CD4-positive, alpha-beta T cell (primary cell): ENCODE measurements at regions of chr12 and their contacts with region 1.

Region 1: DNA sequence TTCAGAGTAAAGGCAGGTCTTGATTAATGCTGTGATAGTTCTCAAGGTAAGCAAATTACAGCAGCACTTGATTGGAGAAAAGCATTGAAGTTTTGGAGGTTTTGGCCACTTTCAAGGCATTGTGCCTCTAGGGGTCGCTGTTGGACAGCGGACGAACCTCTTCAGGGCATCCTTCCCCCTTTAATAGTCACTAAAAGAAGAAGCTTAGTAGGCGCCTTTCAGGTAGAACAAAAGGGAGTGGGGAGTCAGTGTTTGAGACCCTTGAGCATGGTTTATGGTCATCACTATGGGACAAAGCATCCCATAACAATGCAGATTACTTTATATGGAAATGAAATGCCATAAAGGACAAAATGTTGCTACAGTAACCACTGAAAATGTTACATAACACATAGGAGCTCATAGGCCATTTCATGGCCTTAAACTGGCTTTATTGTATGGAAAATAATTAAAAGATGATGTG is 199.5 kb upstream of the DCN start:
- DNase-seq: peak; percentile 77 to 94 (median 86)
- ATAC-seq: peak; percentile 89
- H3K4me3 ChIP-seq: peak overlapping the region; percentile 21
- H3K4me3 Mint-ChIP-seq: peak overlapping the region; percentile 81
- H3K27ac ChIP-seq: no peak overlapping the region
- H3K27ac Mint-ChIP-seq: peak overlapping the region; percentile 1
- H3K4me1 ChIP-seq: peaks cover 7% of the 10 kb centered on the region
- H3K4me1 Mint-ChIP-seq: peaks cover 5% of the 10 kb centered on the region
- H3K27me3 ChIP-seq: peaks cover 0 to 5% of the 10 kb centered on the region in 2 experiments
- H3K27me3 Mint-ChIP-seq: peaks cover 4% of the 10 kb centered on the region
- CTCF ChIP-seq: peak; percentile 90

Region 2: DNA sequence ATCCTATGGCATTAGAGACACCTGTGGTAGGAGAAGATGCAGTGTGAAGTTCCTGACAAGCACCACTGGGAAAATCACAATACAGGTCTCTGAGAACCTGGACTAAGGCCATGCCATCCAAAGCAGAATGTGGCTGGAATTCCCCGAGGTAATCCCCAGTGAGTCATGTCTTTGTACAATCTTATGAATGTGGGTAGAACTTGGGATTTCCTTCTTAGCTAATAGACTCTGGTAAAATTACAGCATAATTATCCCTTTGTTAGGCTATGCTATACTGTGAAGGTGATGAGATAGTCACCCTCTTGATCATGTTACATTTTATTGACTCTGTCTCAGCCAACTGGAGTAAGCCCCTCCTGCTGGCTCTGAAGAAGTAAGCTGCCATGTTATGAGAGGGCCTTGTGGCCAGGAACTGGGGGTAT is 24.8 kb after region 1 on chr12:
- CTCF ChIA-PET with region 1: no interaction called
- POLR2A ChIA-PET with region 1: no interaction called
- intact Hi-C with region 1: no loop called
- DNase-seq: peak in 1 of 14 experiments; percentile 18
- ATAC-seq: no peak
- H3K4me3 ChIP-seq: no peak overlapping the region
- H3K4me3 Mint-ChIP-seq: no peak overlapping the region
- H3K27ac ChIP-seq: no peak overlapping the region
- H3K27ac Mint-ChIP-seq: no peak overlapping the region
- H3K4me1 ChIP-seq: no peaks in the 10 kb centered on the region
- H3K4me1 Mint-ChIP-seq: no peaks in the 10 kb centered on the region
- H3K27me3 ChIP-seq: no peaks in the 10 kb centered on the region
- H3K27me3 Mint-ChIP-seq: no peaks in the 10 kb centered on the region
- CTCF ChIP-seq: no peak

Region 3: GRCh38 chr12:91577586-91578539 is 195.8 kb after region 1 on chr12:
- CTCF ChIA-PET with region 1: interaction called, 4 read pairs
- POLR2A ChIA-PET with region 1: no interaction called
- intact Hi-C with region 1: loop called in 1 of 2 experiments (anchors 5 kb)
- DNase-seq: peak in 3 of 14 experiments; percentile 47 to 57 (median 50)
- ATAC-seq: peak; percentile 82
- H3K4me3 ChIP-seq: peak overlapping the region; percentile 47
- H3K4me3 Mint-ChIP-seq: peak overlapping the region; percentile 76
- H3K27ac ChIP-seq: no peak overlapping the region
- H3K27ac Mint-ChIP-seq: peak overlapping the region; percentile 28
- H3K4me1 ChIP-seq: no peaks in the 10 kb centered on the region
- H3K4me1 Mint-ChIP-seq: peaks cover 15% of the 10 kb centered on the region
- H3K27me3 ChIP-seq: no peaks in the 10 kb centered on the region
- H3K27me3 Mint-ChIP-seq: no peaks in the 10 kb centered on the region
- CTCF ChIP-seq: peak; percentile 85

Region 4: GRCh38 chr12:91985002-91985787 is 603.1 kb after region 1 on chr12:
- CTCF ChIA-PET with region 1: interaction called, 3 read pairs
- POLR2A ChIA-PET with region 1: no interaction called
- intact Hi-C with region 1: loop called in 1 of 2 experiments (anchors 10 kb)
- DNase-seq: no peak
- ATAC-seq: no peak
- H3K4me3 ChIP-seq: no peak overlapping the region
- H3K4me3 Mint-ChIP-seq: no peak overlapping the region
- H3K27ac ChIP-seq: no peak overlapping the region
- H3K27ac Mint-ChIP-seq: no peak overlapping the region
- H3K4me1 ChIP-seq: peaks cover 3% of the 10 kb centered on the region
- H3K4me1 Mint-ChIP-seq: peaks cover 73% of the 10 kb centered on the region
- H3K27me3 ChIP-seq: no peaks in the 10 kb centered on the region
- H3K27me3 Mint-ChIP-seq: no peaks in the 10 kb centered on the region
- CTCF ChIP-seq: no peak

Region 5: GRCh38 chr12:92608151-92609091 is 1226.3 kb after region 1 on chr12:
- CTCF ChIA-PET with region 1: interaction called, 10 read pairs
- POLR2A ChIA-PET with region 1: no interaction called
- intact Hi-C with region 1: no loop called
- DNase-seq: peak in 3 of 14 experiments; percentile 37 to 74 (median 65)
- ATAC-seq: peak; percentile 15
- H3K4me3 ChIP-seq: no peak overlapping the region
- H3K4me3 Mint-ChIP-seq: peak overlapping the region; percentile 18
- H3K27ac ChIP-seq: no peak overlapping the region
- H3K27ac Mint-ChIP-seq: peak overlapping the region; percentile 13
- H3K4me1 ChIP-seq: no peaks in the 10 kb centered on the region
- H3K4me1 Mint-ChIP-seq: peaks cover 11% of the 10 kb centered on the region
- H3K27me3 ChIP-seq: no peaks in the 10 kb centered on the region
- H3K27me3 Mint-ChIP-seq: no peaks in the 10 kb centered on the region
- CTCF ChIP-seq: peak; percentile 46